HCT116 (cell line): ENCODE measurements at regions of chr2 and their contacts with region 1.

Region 1: DNA sequence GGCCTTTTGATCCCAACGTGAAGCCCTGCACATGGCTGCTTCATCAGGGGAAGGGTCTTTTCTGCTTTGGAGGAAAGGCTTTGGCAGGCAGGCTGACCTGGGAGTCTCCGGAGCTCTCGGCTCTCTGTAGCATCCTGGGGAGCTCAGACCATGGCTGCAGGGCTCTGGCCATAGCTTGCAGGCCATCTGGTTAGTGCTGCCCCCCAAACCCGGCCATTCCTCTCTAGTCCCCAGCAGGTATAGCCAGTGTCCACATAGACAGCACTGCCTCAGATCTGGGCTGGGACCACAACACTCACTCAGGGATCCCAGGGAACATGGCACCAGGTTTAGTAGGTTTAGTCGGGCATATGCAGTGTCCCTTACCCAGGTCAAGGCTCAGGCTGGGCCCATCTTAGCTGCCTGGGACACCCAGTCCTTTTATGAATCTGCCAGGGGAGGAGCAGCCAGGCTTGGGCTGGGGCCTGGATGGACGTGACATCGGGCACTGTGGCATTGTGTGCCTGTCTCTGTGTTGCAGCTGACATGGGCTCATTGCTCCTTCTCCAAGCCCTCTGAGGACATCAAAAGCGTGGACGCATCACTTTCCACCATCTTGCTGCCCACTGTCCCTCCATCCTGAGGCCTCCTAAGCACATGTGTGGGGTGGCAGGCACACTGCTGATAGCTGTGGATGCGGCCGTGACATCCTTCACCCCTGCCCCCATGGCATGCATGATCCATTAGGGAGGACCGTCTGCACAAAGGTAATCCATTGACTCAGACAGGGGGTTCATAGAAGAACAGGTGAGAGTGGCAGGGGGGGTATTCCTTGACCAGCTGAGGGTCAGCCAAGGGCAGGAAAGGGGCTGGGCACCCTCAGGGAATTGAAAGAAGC is 19.2 kb upstream of the GPR35 start:
- DNase-seq: no peak
- ATAC-seq: no peak
- H3K4me3 ChIP-seq: no peak overlapping the region
- H3K27ac ChIP-seq: no peak overlapping the region; the same call in 1 of the 2 replicates
- H3K4me1 ChIP-seq: peaks cover 8 to 25% of the 10 kb centered on the region in 2 experiments; a peak in 3 of 4 replicates
- H3K27me3 ChIP-seq: no peaks in the 10 kb centered on the region
- CTCF ChIP-seq: no peak
- POLR2A ChIP-seq: no peak
- RAD21 ChIP-seq: no peak

Region 2: DNA sequence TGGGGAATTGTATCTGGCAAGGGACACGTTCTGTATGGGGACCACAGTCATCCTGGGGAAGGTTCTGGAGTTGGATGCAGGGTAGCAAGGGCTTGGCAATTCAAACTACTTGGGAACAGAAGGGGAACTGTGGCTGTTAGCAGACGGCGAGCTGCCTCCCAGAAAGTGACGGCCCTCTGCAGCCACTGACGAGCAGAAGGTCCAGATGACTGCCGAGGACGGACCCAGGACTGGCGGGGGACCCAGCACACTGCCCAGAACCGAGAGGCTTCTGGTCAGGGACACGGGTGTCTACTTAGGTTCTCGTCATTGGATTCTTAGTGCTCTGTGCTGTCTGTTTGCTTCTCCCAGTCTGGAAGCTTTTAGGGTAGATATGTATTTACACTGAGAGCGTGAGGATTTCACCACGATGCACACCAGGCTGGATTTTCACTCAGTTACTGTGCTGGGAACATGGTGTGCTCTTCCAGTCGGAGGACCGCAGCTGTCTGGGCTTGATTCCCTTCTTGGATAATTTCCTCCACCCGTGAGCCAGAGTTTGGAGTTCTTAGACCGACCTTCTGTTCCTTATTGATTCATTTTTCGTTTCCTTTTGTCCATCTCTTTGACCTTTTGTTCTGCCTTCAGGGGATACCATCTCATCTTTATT is 32.5 kb after region 1 on chr2:
- CTCF ChIA-PET with region 1: no interaction called
- POLR2A ChIA-PET with region 1: no interaction called
- RAD21 ChIA-PET with region 1: no interaction called
- intact Hi-C with region 1: loop called (anchors 1 kb)
- DNase-seq: no peak
- ATAC-seq: no peak
- H3K4me3 ChIP-seq: no peak overlapping the region
- H3K27ac ChIP-seq: no peak overlapping the region
- H3K4me1 ChIP-seq: no peaks in the 10 kb centered on the region
- H3K27me3 ChIP-seq: peaks cover 10% of the 10 kb centered on the region; the same call in 1 of the 2 replicates
- CTCF ChIP-seq: no peak
- POLR2A ChIP-seq: no peak
- RAD21 ChIP-seq: no peak

Region 3: DNA sequence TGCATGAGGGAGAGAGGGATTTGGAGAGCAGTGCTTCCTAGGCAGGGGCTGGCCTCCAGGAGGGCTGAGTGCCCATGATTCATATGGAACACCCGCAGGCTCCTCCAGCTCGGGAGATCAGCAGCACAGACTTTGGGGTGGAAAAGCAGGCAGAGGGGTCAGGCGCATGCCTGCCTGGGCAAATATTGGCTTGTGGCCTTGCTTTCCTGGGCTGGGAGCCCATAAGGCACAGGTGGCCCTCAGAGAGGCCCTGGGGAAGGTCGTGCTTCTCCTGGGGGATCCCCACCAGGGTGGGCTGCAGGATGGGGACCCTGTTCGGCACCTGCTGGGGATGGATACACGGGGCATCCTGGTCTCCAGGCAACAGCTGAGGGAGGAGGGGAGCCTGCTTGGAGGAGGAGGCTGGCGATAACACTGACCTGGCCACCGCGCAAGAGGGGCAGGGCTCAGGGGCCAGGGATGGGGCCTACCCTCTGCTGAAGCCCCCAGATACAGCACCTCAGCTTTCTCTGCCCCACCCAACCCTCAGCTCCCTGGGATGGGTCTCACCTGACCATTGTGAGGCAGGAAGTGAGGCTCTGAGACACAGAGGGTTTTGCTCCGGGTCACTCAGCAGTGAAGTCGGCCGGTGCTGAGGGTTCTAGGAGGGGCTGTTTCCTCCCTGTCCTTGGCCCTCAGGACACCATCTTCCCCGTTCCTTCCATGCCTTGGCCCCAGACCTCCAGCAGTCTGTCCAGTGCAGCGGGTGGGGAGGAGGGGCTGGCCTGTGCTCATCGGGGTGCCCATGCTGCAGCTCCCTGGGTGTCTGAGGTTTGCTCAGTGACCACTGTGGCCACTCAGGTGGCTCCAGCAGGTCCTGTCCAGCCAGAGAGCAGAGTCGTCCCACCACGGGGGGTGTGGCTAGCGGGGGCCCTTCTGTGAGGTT is 97.6 kb after region 1 on chr2:
- CTCF ChIA-PET with region 1: no interaction called
- POLR2A ChIA-PET with region 1: no interaction called
- RAD21 ChIA-PET with region 1: no interaction called
- intact Hi-C with region 1: no loop called
- DNase-seq: no peak
- ATAC-seq: no peak
- H3K4me3 ChIP-seq: no peak overlapping the region
- H3K27ac ChIP-seq: no peak overlapping the region
- H3K4me1 ChIP-seq: no peaks in the 10 kb centered on the region
- H3K27me3 ChIP-seq: no peaks in the 10 kb centered on the region; the same call in 1 of the 2 replicates
- CTCF ChIP-seq: no peak
- POLR2A ChIP-seq: no peak
- RAD21 ChIP-seq: no peak